CD14-positive monocyte (primary cell): ENCODE measurements at regions of chr1 and their contacts with region 1.

Region 1: DNA sequence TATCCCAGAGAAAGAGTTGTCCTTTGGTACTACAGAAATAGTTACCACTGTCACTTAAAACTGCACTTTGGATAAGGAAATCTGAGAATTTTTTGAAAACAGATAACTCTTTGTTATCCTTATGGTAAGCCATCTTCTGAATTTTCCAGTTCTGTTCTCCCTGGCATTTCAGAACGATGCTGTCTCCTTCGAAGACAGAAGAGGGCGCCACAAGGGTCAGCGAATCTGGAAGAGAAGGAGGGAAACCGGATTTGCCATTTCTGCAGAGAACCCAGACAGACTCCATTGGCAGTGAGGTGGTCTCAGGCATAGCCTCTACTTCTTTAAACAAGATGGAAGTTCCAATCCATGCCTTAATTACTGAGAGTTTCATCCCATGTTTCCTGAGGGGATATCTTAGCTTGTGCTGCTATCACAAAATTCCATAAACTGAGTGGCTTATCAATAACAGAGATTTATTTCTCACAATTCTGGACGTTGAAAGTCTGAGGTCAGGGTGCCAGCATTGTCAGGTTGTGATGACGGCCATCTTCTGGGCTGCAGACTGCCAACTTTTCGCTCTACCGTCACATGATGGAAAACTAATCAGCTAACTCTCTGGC is 6.4 kb downstream of the FCRL2 start:
- DNase-seq: no peak
- H3K4me3 ChIP-seq: no peak overlapping the region
- H3K4me3 Mint-ChIP-seq: no peak overlapping the region
- H3K27ac ChIP-seq: no peak overlapping the region
- H3K27ac Mint-ChIP-seq: no peak overlapping the region
- H3K4me1 ChIP-seq: peaks cover 6 to 23% of the 10 kb centered on the region in 2 donors
- H3K4me1 Mint-ChIP-seq: peaks cover 20% of the 10 kb centered on the region
- H3K27me3 ChIP-seq: peaks cover 4 to 9% of the 10 kb centered on the region in 2 donors
- H3K27me3 Mint-ChIP-seq: peaks cover 6 to 25% (median 14%) of the 10 kb centered on the region in 3 donors
- CTCF ChIP-seq: peak; percentile 50

Region 2: DNA sequence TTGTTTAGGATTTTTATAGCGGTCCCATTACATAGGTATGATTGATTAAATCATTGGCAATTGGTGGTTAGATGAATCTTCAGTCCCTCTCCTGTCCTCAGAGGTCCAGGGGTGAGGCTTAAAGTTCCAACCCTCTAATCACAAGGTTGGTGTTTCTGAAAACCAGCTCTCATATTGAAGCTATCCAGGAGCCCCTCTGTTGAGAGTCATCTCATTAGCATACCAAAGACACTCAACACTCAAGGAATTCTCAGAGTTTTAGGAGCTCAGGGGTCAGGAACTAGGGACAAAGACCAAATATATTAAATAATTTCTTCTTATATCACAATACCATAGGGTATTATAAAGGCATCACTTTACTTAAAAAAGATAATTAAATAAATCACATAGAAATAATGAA is 16.9 kb before region 1 on chr1:
- intact Hi-C with region 1: loop called in 1 of 2 experiments (anchors 2 kb)
- DNase-seq: no peak
- H3K4me3 ChIP-seq: no peak overlapping the region
- H3K4me3 Mint-ChIP-seq: no peak overlapping the region
- H3K27ac ChIP-seq: no peak overlapping the region
- H3K27ac Mint-ChIP-seq: no peak overlapping the region
- H3K4me1 ChIP-seq: no peaks in the 10 kb centered on the region
- H3K4me1 Mint-ChIP-seq: no peaks in the 10 kb centered on the region
- H3K27me3 ChIP-seq: peaks cover 0 to 2% of the 10 kb centered on the region in 2 donors
- H3K27me3 Mint-ChIP-seq: peaks cover 1 to 5% (median 2%) of the 10 kb centered on the region in 3 donors
- CTCF ChIP-seq: no peak